ENCODE measurements at regions of chr10 and their contacts with region 1.

Region 1: GRCh38 chr10:4623757-4624420 is 202.1 kb upstream of the AKR1E2 start:
- DNase-seq: no peak
- ATAC-seq: no peak
- H3K4me3 ChIP-seq: no peak overlapping the region
- H3K27ac ChIP-seq: no peak overlapping the region
- H3K4me1 ChIP-seq: no peaks in the 10 kb centered on the region
- H3K27me3 ChIP-seq: no peaks in the 10 kb centered on the region
- CTCF ChIP-seq: no peak

Region 2: DNA sequence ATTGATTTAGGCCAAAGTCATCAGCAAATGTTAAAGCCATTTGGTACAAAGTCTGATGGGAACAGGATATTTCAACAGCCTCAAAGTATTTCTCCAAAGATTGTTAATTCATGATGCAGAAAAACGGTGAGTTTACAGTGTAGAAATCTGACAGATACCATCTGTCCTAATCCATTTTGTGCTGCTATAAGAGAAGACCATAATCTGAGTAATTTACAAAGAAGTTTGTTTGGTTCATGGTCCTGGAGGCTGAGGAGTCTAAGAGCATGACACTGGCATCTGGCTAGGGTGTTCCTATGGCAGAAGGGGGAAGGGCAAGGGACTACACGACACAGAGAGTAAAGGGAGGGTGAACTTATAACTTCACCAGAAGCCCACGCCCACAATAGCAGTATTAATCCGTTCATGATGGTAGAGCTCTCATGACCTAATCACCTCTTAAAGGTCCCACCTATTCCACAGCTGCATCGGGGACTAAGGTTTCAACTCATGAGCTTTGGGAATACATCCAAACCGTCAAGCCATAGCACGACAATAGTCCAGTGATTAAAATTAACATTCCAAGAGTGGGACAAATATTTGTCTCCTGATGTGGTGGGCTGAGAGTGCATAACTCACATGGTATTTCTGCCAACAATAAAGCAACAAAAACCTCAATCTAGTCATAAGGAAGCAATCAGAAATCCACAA is 96.5 kb before region 1 on chr10:
- intact Hi-C with region 1: loop called in 2 of 10 experiments (anchors 5 to 10 kb)
- DNase-seq: no peak
- ATAC-seq: no peak
- H3K4me3 ChIP-seq: no peak overlapping the region
- H3K27ac ChIP-seq: peak overlapping the region in 1 of 10 donors; percentile 38
- H3K4me1 ChIP-seq: peaks cover 0 to 28% (median 4%) of the 10 kb centered on the region in 9 donors
- H3K27me3 ChIP-seq: no peaks in the 10 kb centered on the region
- CTCF ChIP-seq: no peak

Region 3: DNA sequence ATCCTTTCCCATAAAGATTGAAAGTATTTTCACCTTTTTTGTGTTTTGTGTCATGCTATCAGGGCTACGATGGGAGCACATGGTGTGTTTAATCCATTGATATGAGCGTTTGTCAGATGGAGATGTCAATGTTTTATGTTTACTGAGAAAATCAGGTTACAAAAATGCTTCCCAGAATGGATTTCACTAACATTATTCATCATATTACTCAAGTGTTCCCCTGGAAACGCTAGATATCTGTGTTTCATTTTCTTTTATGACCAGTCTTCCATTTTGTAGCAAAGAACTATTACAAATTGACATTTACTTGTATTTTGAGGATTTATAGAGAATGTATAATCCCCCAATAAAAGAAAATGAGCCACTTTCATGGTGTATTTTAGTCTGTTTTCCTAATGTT is 91.4 kb before region 1 on chr10:
- intact Hi-C with region 1: loop called in 2 of 10 experiments (anchors 5 to 10 kb)
- DNase-seq: no peak
- ATAC-seq: peak in 1 of 8 donors; percentile 31
- H3K4me3 ChIP-seq: no peak overlapping the region
- H3K27ac ChIP-seq: peak overlapping the region in 3 of 10 donors; percentile 13 to 67 (median 31)
- H3K4me1 ChIP-seq: peaks cover 0 to 9% (median 0%) of the 10 kb centered on the region in 9 donors
- H3K27me3 ChIP-seq: no peaks in the 10 kb centered on the region
- CTCF ChIP-seq: no peak

Region 4: GRCh38 chr10:4590807-4591206 is 33.1 kb before region 1 on chr10:
- intact Hi-C with region 1: loop called in 1 of 10 experiments (anchors 2 kb)
- DNase-seq: no peak
- ATAC-seq: no peak
- H3K4me3 ChIP-seq: no peak overlapping the region
- H3K27ac ChIP-seq: no peak overlapping the region
- H3K4me1 ChIP-seq: no peaks in the 10 kb centered on the region
- H3K27me3 ChIP-seq: no peaks in the 10 kb centered on the region
- CTCF ChIP-seq: no peak

Region 5: DNA sequence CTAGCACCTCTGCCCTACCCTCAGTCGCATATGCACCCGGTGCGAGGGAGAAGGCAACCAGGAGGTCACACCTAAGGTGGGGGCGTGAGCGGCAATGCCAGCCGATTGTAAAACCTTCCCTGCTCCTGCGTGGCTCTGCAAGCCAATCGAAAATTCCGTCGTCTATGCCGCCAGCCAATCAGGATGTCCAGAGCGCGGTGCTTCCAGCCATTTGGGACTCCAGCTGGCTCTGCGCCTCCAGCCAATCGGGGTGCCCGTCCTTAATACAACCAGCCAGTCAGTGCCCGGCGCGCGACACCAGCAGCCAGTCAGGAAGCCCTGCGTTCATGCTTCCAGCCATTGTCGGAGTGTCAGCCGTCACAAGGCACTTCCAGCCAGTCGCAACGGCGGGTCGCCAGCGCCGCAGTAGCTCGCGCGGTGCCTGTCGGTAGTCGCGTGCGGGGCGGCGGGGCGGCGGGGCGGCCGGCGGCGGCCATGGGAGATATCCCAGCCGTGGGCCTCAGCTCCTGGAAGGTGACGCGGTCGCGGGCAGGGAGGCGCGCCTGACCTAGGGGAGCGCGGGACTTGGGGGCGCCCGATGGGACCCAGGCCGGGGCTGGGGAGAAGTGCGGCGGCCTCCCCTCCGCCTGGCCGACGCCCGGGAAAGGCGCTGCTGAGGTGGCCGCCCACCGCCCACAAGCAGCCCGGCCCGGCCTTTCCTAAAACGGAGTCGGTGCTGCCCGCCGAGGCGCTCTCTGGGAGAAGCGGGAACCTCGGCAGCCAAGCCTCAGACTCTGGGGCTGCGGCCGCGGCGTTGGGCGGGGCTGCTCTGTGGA is 202.2 kb after region 1 on chr10 and contains the start of gene AKR1E2:
- intact Hi-C with region 1: no loop called
- DNase-seq: peak; percentile 90 to 94
- ATAC-seq: peak; percentile 93 to 96 (median 95)
- H3K4me3 ChIP-seq: peak within 1 kb of the TSS; percentile 51 to 77 (median 68)
- H3K27ac ChIP-seq: peak within 1 kb of the TSS; percentile 69 to 98 (median 94)
- H3K4me1 ChIP-seq: peaks cover 0 to 19% (median 8%) of the 10 kb centered on the region in 9 donors
- H3K27me3 ChIP-seq: peaks cover 0 to 8% (median 0%) of the 10 kb centered on the region in 7 donors
- CTCF ChIP-seq: peak in 1 of 9 donors; percentile 6
- total RNA-seq, gene AKR1E2: 2.0 to 6.5 (median 4.8) TPM

Region 6: DNA sequence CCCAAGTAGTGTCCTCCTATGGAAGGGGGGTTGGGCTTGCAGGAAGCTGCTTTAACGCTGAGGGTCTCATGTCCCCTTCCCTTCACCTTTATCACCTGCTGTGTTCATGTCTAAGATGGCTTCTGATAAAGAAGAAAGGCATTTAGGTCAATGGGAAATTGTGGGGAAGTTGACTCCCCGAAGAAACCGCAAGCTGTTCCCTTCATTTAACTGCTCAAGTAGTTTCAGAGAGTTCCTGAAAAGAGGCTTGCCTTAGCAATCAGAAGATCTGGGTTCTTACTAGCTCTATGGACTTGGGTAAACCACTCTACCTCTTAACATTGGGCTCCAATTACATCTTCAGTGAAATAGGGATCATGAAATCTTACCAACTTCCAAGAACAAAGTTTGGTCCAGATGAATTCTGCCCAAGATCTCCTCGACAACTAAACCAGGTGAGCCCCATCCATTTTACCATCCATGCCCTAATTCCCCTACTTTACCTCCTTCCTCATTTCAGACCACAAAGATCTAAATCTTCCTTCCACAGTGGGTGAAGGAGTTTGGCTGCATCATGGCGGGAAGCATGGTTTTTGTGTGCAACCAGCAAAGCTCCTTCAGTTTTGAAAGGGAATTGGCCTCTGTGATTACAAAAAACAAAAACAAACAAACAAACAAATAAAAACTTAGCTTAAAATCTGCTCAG is 710.4 kb after region 1 on chr10:
- intact Hi-C with region 1: no loop called
- DNase-seq: no peak
- ATAC-seq: no peak
- H3K4me3 ChIP-seq: no peak overlapping the region
- H3K27ac ChIP-seq: no peak overlapping the region
- H3K4me1 ChIP-seq: no peaks in the 10 kb centered on the region
- H3K27me3 ChIP-seq: peaks cover 0 to 15% (median 0%) of the 10 kb centered on the region in 7 donors
- CTCF ChIP-seq: no peak